KBM-7 (cell line): ENCODE measurements at regions of chr2 and their contacts with region 1.

Region 1: GRCh38 chr2:31170071-31170698 is 31.9 kb upstream of the GALNT14 start:
- DNase-seq: peak; percentile 76

Region 2: GRCh38 chr2:30178618-30179434 is 991.4 kb before region 1 on chr2:
- in situ Hi-C with region 1: loop called (anchors 25 kb)
- DNase-seq: no peak

Region 3: DNA sequence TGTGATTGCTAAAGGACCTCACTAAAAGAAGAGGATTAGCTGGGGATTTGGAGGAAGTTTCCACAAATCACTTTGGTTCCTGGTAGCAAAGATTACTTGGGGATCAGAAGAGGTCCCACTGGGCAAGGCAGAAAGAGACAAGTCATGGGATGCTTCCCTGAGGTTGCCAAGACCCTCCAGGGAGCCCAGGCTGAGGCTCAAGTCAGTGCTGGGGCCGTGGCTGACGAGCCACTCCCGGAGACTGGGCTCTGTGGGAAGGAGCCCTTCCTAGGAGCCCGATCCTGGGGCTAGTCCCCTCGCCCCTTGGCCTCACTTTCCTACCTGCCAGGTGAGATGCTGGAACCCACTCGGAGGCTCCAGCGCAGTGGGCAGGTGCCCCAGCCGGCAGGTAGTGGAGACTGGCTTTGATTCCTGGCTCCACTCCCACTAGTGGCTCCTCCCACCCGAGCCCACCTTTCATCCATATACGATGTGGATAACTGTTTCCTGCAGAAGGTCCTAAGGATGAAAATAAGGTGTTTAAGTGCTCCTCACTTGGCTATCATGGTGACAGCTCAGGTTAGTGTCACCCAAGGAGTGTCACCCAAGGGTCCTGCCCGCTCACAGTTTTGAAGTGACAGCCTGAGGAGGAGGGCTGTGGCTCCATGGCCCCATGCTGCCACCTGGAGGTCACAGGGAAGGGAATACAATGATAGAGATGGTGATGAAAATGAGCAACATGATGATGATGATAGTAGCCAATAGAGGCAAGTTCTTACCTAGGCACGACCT is 463.5 kb before region 1 on chr2:
- in situ Hi-C with region 1: loop called (anchors 10 kb)
- DNase-seq: peak; percentile 68

Region 4: DNA sequence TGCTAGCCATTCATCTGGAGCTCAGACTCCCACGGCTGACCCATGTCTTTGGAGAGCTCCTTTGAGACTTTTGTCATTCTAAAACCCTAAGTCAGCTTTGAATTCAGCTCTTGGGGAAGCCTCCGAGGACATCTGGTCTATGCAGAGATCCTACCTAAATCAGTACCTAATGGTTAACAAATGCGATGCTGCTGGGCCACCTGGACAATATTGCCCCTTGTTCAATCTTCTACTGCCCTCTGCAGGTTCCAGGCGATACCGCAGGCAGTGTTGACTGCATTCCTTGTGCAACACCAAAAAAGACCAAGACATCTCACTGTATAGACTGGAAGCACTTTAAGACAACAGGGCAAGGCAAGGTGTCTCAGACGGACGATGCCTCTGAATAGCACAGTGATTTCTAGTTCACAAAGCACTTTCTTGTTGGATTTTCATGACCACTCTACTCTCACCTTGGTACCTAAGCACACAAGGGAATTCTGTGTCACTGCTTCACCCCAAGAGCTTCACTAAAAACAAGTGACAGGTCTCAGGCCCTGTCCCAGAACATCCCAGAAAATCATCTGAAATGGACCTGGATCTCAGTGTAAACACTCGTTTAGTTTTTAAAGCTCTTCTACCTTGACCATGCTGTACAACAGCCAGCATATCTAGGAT is 163.5 kb after region 1 on chr2:
- in situ Hi-C with region 1: loop called (anchors 10 kb)
- DNase-seq: peak; percentile 87